ENCODE measurements at regions of chr16 and their contacts with region 1.

Region 1: GRCh38 chr16:69260019-69260418 is 51.1 kb upstream of the VPS4A start:
- DNase-seq: no peak
- ATAC-seq: no peak
- H3K4me3 ChIP-seq: no peak overlapping the region
- H3K27ac ChIP-seq: no peak overlapping the region
- H3K4me1 ChIP-seq: no peaks in the 10 kb centered on the region
- H3K27me3 ChIP-seq: no peaks in the 10 kb centered on the region
- CTCF ChIP-seq: no peak

Region 2: GRCh38 chr16:69243479-69243878 is 16.5 kb before region 1 on chr16:
- intact Hi-C with region 1: no loop called
- DNase-seq: no peak
- ATAC-seq: no peak
- H3K4me3 ChIP-seq: no peak overlapping the region
- H3K27ac ChIP-seq: no peak overlapping the region
- H3K4me1 ChIP-seq: peaks cover 0 to 10% (median 0%) of the 10 kb centered on the region in 9 donors
- H3K27me3 ChIP-seq: no peaks in the 10 kb centered on the region
- CTCF ChIP-seq: no peak

Region 3: GRCh38 chr16:69276148-69277115 is 16.4 kb after region 1 on chr16:
- intact Hi-C with region 1: no loop called
- DNase-seq: peak; percentile 19 to 51
- ATAC-seq: peak; percentile 84 to 98 (median 96)
- H3K4me3 ChIP-seq: no peak overlapping the region
- H3K27ac ChIP-seq: peak overlapping the region in 6 of 10 donors; percentile 0 to 51 (median 32)
- H3K4me1 ChIP-seq: peaks cover 0 to 27% (median 8%) of the 10 kb centered on the region in 9 donors
- H3K27me3 ChIP-seq: no peaks in the 10 kb centered on the region
- CTCF ChIP-seq: no peak

Region 4: GRCh38 chr16:69301861-69302260 is 41.8 kb after region 1 on chr16:
- intact Hi-C with region 1: loop called in 1 of 10 experiments (anchors 2 kb)
- DNase-seq: no peak
- ATAC-seq: no peak
- H3K4me3 ChIP-seq: no peak overlapping the region
- H3K27ac ChIP-seq: peak overlapping the region in 1 of 10 donors; percentile 34
- H3K4me1 ChIP-seq: peaks cover 0 to 10% (median 0%) of the 10 kb centered on the region in 9 donors
- H3K27me3 ChIP-seq: no peaks in the 10 kb centered on the region
- CTCF ChIP-seq: no peak

Measured in heart right ventricle (tissue), 16 donors.